ENCODE measurements at regions of chr15 and their contacts with region 1.

Region 1: GRCh38 chr15:73964736-73965093 is 27.4 kb downstream of the STOML1 start:
- DNase-seq: peak; percentile 79 to 95 (median 92)
- ATAC-seq: peak; percentile 90 to 92
- H3K4me3 ChIP-seq: no peak overlapping the region
- H3K27ac ChIP-seq: no peak overlapping the region
- H3K4me1 ChIP-seq: no peaks in the 10 kb centered on the region
- H3K27me3 ChIP-seq: no peaks in the 10 kb centered on the region

Region 2: DNA sequence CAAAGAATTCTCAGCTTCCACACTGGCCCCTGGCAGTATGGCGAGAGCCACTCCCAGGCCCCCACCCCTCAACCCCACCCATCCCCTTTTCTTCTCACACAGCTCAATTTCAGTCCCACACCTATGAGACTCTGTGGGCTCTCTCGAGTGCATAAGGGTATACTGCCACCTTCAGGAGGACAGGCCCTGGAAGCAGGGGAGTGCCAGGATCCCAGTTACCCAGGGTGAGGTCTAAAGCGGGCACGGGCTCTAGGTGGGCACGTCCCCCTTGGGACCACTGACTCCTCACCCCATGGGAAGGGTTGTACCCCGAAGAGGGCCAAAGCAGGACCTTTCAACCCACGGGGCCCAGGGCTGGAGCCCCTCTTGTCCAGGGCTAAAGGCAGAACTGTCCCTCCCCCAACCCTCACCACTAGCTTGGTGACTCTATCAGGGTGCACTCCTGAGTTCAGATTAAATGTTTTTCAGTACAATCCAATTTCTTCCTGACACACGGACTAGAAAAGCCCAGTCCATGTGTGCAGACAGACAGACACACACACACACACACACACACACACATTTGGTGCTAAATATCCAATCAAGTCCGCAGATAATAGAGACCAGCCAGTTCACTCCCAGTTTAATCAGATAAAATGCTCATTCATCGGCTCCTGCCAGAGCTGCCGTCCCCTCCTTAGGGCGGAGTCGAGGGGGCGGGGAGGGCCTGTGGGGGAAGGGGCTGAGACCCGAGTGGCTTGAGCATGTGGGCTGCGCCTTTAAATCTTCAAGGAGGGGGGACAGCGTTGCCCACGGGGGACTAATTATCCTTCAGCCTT is 343.3 kb after region 1 on chr15:
- intact Hi-C with region 1: loop called in 1 of 4 experiments (anchors 10 kb)
- DNase-seq: peak; percentile 51 to 79 (median 75)
- ATAC-seq: peak; percentile 84 to 89
- H3K4me3 ChIP-seq: no peak overlapping the region
- H3K27ac ChIP-seq: no peak overlapping the region
- H3K4me1 ChIP-seq: no peaks in the 10 kb centered on the region
- H3K27me3 ChIP-seq: no peaks in the 10 kb centered on the region